Endothelial cell of umbilical vein (primary cell): ENCODE measurements at regions of chr18 and their contacts with region 1.

Region 1: GRCh38 chr18:46281185-46282176 is 177.3 kb downstream of the HAUS1 start:
- DNase-seq: peak; percentile 61
- H3K4me3 ChIP-seq: no peak overlapping the region
- H3K27ac ChIP-seq: no peak overlapping the region
- H3K4me1 ChIP-seq: peaks cover 3% of the 10 kb centered on the region
- H3K27me3 ChIP-seq: no peaks in the 10 kb centered on the region
- CTCF ChIP-seq: peak; percentile 80 to 85
- POLR2A ChIP-seq: no peak

Region 2: DNA sequence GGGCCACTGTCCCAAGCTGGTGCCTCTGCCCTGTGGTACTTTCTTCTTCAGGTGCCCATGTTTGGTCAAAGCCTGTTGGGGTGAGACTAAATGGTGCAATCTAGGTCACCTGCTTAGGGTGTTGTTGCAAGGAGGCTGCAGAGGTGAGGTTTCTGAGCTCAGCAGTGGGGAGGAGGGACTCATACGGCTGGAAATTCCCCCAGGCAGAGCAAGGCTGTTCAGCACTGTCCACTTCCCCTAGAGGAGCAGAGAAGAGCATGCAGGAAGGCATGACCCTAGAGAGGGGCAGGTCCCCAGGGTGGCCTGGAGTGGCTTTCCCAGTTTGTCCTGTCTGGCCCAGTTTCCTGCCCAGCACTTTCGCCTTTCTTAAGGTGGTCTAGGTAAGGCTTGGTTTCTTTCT is 33.7 kb after region 1 on chr18:
- CTCF ChIA-PET with region 1: no interaction called
- POLR2A ChIA-PET with region 1: no interaction called
- dilution Hi-C with region 1: no loop called
- intact Hi-C with region 1: no loop called
- DNase-seq: no peak
- H3K4me3 ChIP-seq: no peak overlapping the region
- H3K27ac ChIP-seq: no peak overlapping the region
- H3K4me1 ChIP-seq: no peaks in the 10 kb centered on the region
- H3K27me3 ChIP-seq: peaks cover 1 to 2% of the 10 kb centered on the region in 2 experiments
- CTCF ChIP-seq: no peak
- POLR2A ChIP-seq: no peak

Region 3: DNA sequence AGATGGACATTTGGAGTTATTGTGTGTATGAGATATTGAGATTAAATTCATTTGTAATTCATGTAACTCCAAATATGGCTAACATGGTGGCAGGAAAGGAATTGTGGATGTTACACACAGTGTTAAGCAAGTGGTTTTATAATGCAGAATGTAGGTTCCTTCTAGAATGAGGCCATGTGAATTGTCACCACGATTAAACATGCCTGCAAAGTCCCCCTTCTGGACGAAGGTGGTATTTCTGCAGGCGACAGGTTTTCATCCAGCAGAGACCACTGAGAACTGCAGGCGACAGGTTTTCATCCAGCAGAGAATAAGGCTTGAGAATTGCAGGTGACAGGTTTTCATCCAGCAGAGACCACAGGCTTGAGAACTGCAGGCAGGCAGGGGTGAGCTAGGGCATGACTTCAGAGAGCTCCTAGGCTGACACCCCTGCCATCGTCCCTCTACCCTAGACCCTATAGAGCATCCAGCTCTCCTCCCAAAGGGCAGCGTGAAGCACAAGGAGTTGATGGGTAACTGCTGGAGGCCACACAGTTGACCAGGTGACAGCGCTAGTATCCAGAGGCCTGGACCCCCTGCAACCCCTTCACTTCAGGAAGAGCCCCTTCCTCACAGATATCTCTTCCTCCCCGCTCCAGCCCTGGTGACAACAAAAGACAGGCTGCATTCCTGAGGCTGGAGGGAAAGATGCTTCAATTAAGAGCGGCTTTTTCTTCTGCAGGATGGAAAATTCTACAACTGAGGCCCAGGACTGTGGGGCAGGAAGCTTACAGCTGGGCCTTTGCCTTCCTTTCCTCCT is 199.8 kb after region 1 on chr18:
- CTCF ChIA-PET with region 1: interaction called, 55 read pairs
- POLR2A ChIA-PET with region 1: no interaction called
- dilution Hi-C with region 1: no loop called
- intact Hi-C with region 1: loop called (anchors 1 kb)
- DNase-seq: peak; percentile 37
- H3K4me3 ChIP-seq: no peak overlapping the region
- H3K27ac ChIP-seq: no peak overlapping the region
- H3K4me1 ChIP-seq: no peaks in the 10 kb centered on the region
- H3K27me3 ChIP-seq: no peaks in the 10 kb centered on the region
- CTCF ChIP-seq: peak; percentile 57 to 61
- POLR2A ChIP-seq: no peak

Region 4: GRCh38 chr18:46622999-46623398 is 341.5 kb after region 1 on chr18:
- CTCF ChIA-PET with region 1: interaction called, 20 read pairs
- POLR2A ChIA-PET with region 1: no interaction called
- dilution Hi-C with region 1: no loop called
- intact Hi-C with region 1: no loop called
- DNase-seq: no peak
- H3K4me3 ChIP-seq: no peak overlapping the region
- H3K27ac ChIP-seq: no peak overlapping the region
- H3K4me1 ChIP-seq: peaks cover 7% of the 10 kb centered on the region
- H3K27me3 ChIP-seq: no peaks in the 10 kb centered on the region
- CTCF ChIP-seq: no peak
- POLR2A ChIP-seq: no peak